ENCODE measurements at regions of chr10 and their contacts with region 1.

Region 1: GRCh38 chr10:784403-785088 is 95.1 kb upstream of the DIP2C start:
- ATAC-seq: peak; percentile 66 to 90 (median 88)
- H3K4me3 ChIP-seq: peak overlapping the region; percentile 10 to 32 (median 18)
- H3K27ac ChIP-seq: peak overlapping the region in 1 of 2 donors; percentile 70
- H3K4me1 ChIP-seq: peaks cover 14% of the 10 kb centered on the region in 2 donors

Region 2: GRCh38 chr10:530717-531116 is 253.8 kb before region 1 on chr10:
- in situ Hi-C with region 1: no loop called
- ATAC-seq: no peak
- H3K4me3 ChIP-seq: no peak overlapping the region
- H3K27ac ChIP-seq: no peak overlapping the region
- H3K4me1 ChIP-seq: peaks cover 4 to 6% of the 10 kb centered on the region in 2 donors

Region 3: GRCh38 chr10:689433-690371 is 94.8 kb before region 1 on chr10 and contains the start of gene DIP2C:
- in situ Hi-C with region 1: loop called in 1 of 9 experiments (anchors 25 kb)
- ATAC-seq: peak; percentile 75 to 93 (median 88)
- H3K4me3 ChIP-seq: peak within 1 kb of the TSS; percentile 86 to 97 (median 94)
- H3K27ac ChIP-seq: peak within 1 kb of the TSS; percentile 93 to 95
- H3K4me1 ChIP-seq: peaks cover 19 to 22% of the 10 kb centered on the region in 2 donors
- total RNA-seq, gene DIP2C: 1.9 to 26.3 (median 19.8) TPM

Region 4: DNA sequence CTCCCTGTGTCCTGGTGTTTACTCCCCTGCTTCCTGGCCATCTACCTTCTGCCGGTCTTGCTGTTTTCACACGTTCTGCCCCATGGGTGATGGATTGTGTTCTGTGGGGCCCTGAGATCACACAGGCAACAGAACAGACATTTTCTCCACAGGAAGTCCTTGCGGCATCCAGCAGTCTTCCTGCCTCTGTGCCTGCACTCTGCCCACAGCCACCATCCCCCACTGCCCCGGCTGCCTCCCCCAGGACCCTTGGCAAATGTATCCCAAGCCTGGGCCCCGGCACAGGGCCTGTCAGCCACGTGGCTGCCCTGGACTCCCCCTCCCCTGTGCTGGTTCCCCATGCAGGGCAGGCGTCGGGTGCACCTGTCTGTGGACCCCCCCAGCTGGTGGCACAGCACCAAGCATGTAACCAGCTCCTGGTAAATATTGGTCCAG is 455.8 kb after region 1 on chr10:
- in situ Hi-C with region 1: no loop called
- ATAC-seq: peak in 4 of 8 experiments; percentile 25 to 57 (median 44)
- H3K4me3 ChIP-seq: no peak overlapping the region
- H3K27ac ChIP-seq: no peak overlapping the region
- H3K4me1 ChIP-seq: peaks cover 9 to 11% of the 10 kb centered on the region in 2 donors